CD4-positive, alpha-beta memory T cell (primary cell): ENCODE measurements at regions of chr20 and their contacts with region 1.

Region 1: GRCh38 chr20:8153281-8153908 is 21.3 kb downstream of the PLCB1 start:
- DNase-seq: peak; percentile 33 to 57 (median 47)
- H3K4me3 ChIP-seq: no peak overlapping the region
- H3K4me3 Mint-ChIP-seq: peak overlapping the region in 7 of 8 donors; percentile 1 to 66 (median 52)
- H3K27ac ChIP-seq: no peak overlapping the region
- H3K27ac Mint-ChIP-seq: peak overlapping the region; percentile 10 to 65 (median 48)
- H3K4me1 ChIP-seq: peaks cover 70% of the 10 kb centered on the region
- H3K4me1 Mint-ChIP-seq: peaks cover 34 to 70% (median 55%) of the 10 kb centered on the region in 4 donors
- H3K27me3 ChIP-seq: no peaks in the 10 kb centered on the region
- H3K27me3 Mint-ChIP-seq: no peaks in the 10 kb centered on the region

Region 2: DNA sequence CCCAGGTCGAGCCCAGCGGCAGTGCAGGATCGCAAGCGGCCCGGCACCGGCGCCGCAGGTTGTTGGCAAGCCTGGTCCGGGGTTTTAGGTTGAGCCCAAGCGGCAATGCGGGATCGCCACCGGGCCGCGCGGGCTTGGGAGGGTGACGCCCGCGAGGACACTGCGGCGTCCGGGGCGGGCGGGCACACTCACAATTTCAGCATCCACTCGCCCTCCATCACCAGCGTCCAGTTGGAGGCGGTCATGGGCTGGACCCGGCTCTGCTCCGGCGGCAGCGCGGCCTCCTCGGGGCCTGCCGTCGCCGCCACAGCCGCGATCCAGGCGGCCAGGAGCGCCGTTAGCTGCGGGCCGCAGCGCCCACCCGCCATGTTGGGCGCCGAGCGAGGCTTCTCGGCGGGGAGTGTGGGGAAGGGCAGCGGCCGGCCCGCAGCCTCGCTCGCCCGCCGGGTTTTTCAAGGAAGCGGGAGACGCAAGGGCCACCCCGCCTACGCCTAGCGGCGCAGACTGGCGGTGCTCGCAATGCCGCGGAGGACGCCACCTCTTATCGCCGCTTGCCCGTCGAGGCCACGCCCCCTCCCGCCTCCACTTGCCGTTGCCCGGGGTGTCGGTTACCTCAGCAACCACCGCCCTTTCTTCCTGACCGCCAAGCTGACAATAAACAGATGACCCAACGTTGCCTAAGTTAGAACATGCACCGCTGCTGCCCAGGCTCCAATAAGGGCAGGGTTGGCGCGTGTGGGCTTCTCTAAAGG is 134.0 kb before region 1 on chr20 and contains the start of gene TMX4:
- CTCF ChIA-PET with region 1: no interaction called
- POLR2A ChIA-PET with region 1: interaction called, 9 read pairs
- intact Hi-C with region 1: loop called (anchors 5 kb)
- DNase-seq: peak; percentile 86 to 93 (median 88)
- H3K4me3 ChIP-seq: peak within 1 kb of the TSS; percentile 62 to 88
- H3K4me3 Mint-ChIP-seq: peak within 1 kb of the TSS in 7 of 8 donors; percentile 88 to 96 (median 93)
- H3K27ac ChIP-seq: peak within 1 kb of the TSS; percentile 82
- H3K27ac Mint-ChIP-seq: peak within 1 kb of the TSS; percentile 84 to 97 (median 91)
- H3K4me1 ChIP-seq: peaks cover 57% of the 10 kb centered on the region
- H3K4me1 Mint-ChIP-seq: peaks cover 25 to 42% (median 32%) of the 10 kb centered on the region in 4 donors
- H3K27me3 ChIP-seq: no peaks in the 10 kb centered on the region
- H3K27me3 Mint-ChIP-seq: no peaks in the 10 kb centered on the region
- total RNA-seq, gene TMX4: 71.6 to 74.6 TPM

Region 3: DNA sequence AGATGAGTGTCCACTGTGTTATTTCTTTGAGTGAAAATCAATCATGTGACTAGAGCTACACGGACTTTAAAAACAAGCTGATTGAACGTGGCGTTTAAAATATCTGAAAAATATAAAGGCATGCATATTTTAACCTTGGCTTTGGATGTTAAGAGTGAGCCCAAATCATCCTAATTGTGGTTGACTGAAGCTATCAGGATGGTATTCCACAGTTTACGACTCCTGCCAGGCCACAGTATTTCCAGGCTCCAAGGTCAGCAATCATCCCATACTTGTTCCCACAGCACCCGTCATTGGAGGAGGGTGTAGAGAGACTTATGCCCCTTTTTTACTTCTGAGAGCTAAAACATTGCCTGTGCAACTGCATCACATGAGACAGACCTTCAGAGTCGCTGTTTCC is 90.6 kb before region 1 on chr20:
- CTCF ChIA-PET with region 1: no interaction called
- POLR2A ChIA-PET with region 1: no interaction called
- intact Hi-C with region 1: no loop called
- DNase-seq: no peak
- H3K4me3 ChIP-seq: no peak overlapping the region
- H3K4me3 Mint-ChIP-seq: no peak overlapping the region
- H3K27ac ChIP-seq: no peak overlapping the region
- H3K27ac Mint-ChIP-seq: no peak overlapping the region
- H3K4me1 ChIP-seq: no peaks in the 10 kb centered on the region
- H3K4me1 Mint-ChIP-seq: no peaks in the 10 kb centered on the region
- H3K27me3 ChIP-seq: no peaks in the 10 kb centered on the region
- H3K27me3 Mint-ChIP-seq: peaks cover 5 to 10% of the 10 kb centered on the region in 2 donors

Region 4: GRCh38 chr20:8213831-8214587 is 60.6 kb after region 1 on chr20:
- CTCF ChIA-PET with region 1: no interaction called
- POLR2A ChIA-PET with region 1: interaction called, 3 read pairs
- intact Hi-C with region 1: loop called (anchors 5 kb)
- DNase-seq: peak in 4 of 5 donors; percentile 22 to 39 (median 30)
- H3K4me3 ChIP-seq: peak overlapping the region; percentile 32 to 38
- H3K4me3 Mint-ChIP-seq: peak overlapping the region; percentile 76 to 94 (median 84)
- H3K27ac ChIP-seq: peak overlapping the region; percentile 4
- H3K27ac Mint-ChIP-seq: peak overlapping the region; percentile 85 to 94 (median 91)
- H3K4me1 ChIP-seq: peaks cover 26% of the 10 kb centered on the region
- H3K4me1 Mint-ChIP-seq: peaks cover 22 to 38% (median 28%) of the 10 kb centered on the region in 4 donors
- H3K27me3 ChIP-seq: no peaks in the 10 kb centered on the region
- H3K27me3 Mint-ChIP-seq: no peaks in the 10 kb centered on the region